SK-N-SH (cell line): ENCODE measurements at regions of chr11 and their contacts with region 1.

Region 1: GRCh38 chr11:65487413-65488272 is 11.2 kb upstream of the MALAT1 start:
- DNase-seq: peak; percentile 90
- H3K4me3 ChIP-seq: peak overlapping the region; percentile 25 to 50
- H3K27ac ChIP-seq: peak overlapping the region; percentile 100
- H3K4me1 ChIP-seq: peaks cover 71 to 72% of the 10 kb centered on the region in 2 experiments
- H3K27me3 ChIP-seq: no peaks in the 10 kb centered on the region
- CTCF ChIP-seq: no peak
- EP300 ChIP-seq: peak; percentile 79 to 90
- RAD21 ChIP-seq: peak; percentile 40

Region 2: GRCh38 chr11:65329944-65330403 is 157.7 kb before region 1 on chr11:
- CTCF ChIA-PET with region 1: no interaction called
- POLR2A ChIA-PET with region 1: no interaction called
- DNase-seq: peak; percentile 70
- H3K4me3 ChIP-seq: peak overlapping the region in 1 of 2 experiments; percentile 36; a peak in 1 of 4 replicates
- H3K27ac ChIP-seq: peak overlapping the region in 1 of 2 experiments; percentile 13; a peak in 2 of 4 replicates
- H3K4me1 ChIP-seq: peaks cover 3 to 4% of the 10 kb centered on the region in 2 experiments; a peak in 3 of 4 replicates
- H3K27me3 ChIP-seq: no peaks in the 10 kb centered on the region
- CTCF ChIP-seq: peak; percentile 85
- EP300 ChIP-seq: no peak
- RAD21 ChIP-seq: peak; percentile 72

Region 3: GRCh38 chr11:65477149-65477965 is 10.3 kb before region 1 on chr11:
- CTCF ChIA-PET with region 1: interaction called, 58 read pairs
- POLR2A ChIA-PET with region 1: interaction called, 591 read pairs
- DNase-seq: peak; percentile 98
- H3K4me3 ChIP-seq: peak overlapping the region; percentile 67 to 70
- H3K27ac ChIP-seq: peak overlapping the region; percentile 91 to 100
- H3K4me1 ChIP-seq: peaks cover 30 to 38% of the 10 kb centered on the region in 2 experiments
- H3K27me3 ChIP-seq: no peaks in the 10 kb centered on the region
- CTCF ChIP-seq: no peak
- EP300 ChIP-seq: peak; percentile 25 to 60; a peak in 2 of 4 replicates
- RAD21 ChIP-seq: no peak